K562 (cell line): ENCODE measurements at regions of chr13 and their contacts with region 1.

Region 1: DNA sequence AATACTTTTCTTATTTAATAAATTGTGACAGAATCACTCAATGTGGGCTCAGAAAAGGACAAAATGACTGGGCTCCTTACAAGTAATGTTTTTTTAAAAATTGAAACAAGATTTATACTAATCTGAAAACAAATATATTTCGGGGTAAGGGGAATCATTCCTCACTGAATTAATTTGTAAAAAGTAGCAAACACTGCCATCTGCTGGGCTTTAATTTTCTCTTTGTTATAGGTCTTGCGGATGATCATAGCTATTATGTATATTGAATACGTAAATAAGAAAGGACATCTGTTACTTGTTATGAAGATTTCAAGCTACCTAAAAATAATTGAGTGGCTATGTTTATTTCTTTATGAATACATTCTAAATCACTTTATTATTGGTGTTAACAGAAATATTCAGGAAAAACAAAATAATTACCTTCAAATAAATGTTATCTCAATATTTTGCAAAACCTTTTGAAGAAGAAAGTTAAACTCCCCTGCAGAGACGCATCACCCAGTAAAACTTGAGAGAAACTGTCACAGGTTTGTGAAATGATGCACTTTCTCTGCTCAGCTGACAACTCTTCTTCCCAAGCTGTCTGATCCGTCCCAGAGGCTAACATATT is 17.8 kb upstream of the ENOX1 start:
- DNase-seq: peak in 3 of 4 experiments; percentile 8 to 36 (median 18)
- ATAC-seq: peak; percentile 64; the same call in 1 of the 3 replicates
- H3K4me3 ChIP-seq: no peak overlapping the region
- H3K27ac ChIP-seq: no peak overlapping the region
- H3K4me1 ChIP-seq: no peaks in the 10 kb centered on the region
- H3K27me3 ChIP-seq: no peaks in the 10 kb centered on the region
- CTCF ChIP-seq: peak in 1 of 3 experiments; percentile 50; a peak in 2 of 6 replicates
- EP300 ChIP-seq: no peak
- POLR2A ChIP-seq: no peak
- RAD21 ChIP-seq: peak; percentile 51 to 63

Region 2: GRCh38 chr13:42969558-42970172 is 834.9 kb before region 1 on chr13:
- CTCF ChIA-PET with region 1: no interaction called
- POLR2A ChIA-PET with region 1: no interaction called
- in situ Hi-C with region 1: no loop called
- intact Hi-C with region 1: loop called (anchors 5 kb)
- DNase-seq: peak; percentile 63 to 69 (median 65)
- ATAC-seq: peak; percentile 95
- H3K4me3 ChIP-seq: no peak overlapping the region
- H3K27ac ChIP-seq: no peak overlapping the region
- H3K4me1 ChIP-seq: no peaks in the 10 kb centered on the region
- H3K27me3 ChIP-seq: no peaks in the 10 kb centered on the region
- CTCF ChIP-seq: peak; percentile 64 to 77 (median 70)
- EP300 ChIP-seq: no peak
- POLR2A ChIP-seq: no peak
- RAD21 ChIP-seq: peak; percentile 19 to 51; a peak in 2 of 4 replicates

Region 3: DNA sequence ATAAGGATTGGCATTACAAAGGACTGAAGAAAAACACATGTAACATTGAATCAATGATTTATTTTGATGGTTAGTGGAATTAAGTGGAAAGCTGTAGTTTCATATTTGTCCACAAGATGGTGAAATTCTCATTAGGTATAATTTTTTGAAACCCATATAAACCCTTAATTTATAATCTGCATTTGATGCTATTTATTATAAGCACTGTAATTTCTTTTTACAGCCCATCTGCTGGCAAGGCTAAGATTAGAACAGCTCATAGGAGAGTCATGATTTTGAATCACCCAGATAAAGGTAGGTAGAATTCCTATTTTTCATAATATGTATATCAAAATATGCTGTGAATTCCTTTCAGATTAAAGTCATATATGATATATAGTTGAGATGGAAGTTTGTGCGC is 719.0 kb before region 1 on chr13:
- CTCF ChIA-PET with region 1: no interaction called
- POLR2A ChIA-PET with region 1: no interaction called
- in situ Hi-C with region 1: no loop called
- intact Hi-C with region 1: loop called (anchors 5 kb)
- DNase-seq: peak; percentile 2 to 3 (median 3)
- ATAC-seq: no peak
- H3K4me3 ChIP-seq: no peak overlapping the region
- H3K27ac ChIP-seq: no peak overlapping the region
- H3K4me1 ChIP-seq: no peaks in the 10 kb centered on the region
- H3K27me3 ChIP-seq: no peaks in the 10 kb centered on the region
- CTCF ChIP-seq: peak in 1 of 3 experiments; percentile 41; a peak in 3 of 6 replicates
- EP300 ChIP-seq: no peak
- POLR2A ChIP-seq: no peak
- RAD21 ChIP-seq: peak in 1 of 2 experiments; percentile 28; a peak in 2 of 4 replicates

Region 4: GRCh38 chr13:43648733-43649132 is 155.8 kb before region 1 on chr13:
- CTCF ChIA-PET with region 1: no interaction called
- POLR2A ChIA-PET with region 1: no interaction called
- in situ Hi-C with region 1: no loop called
- intact Hi-C with region 1: no loop called
- DNase-seq: no peak
- ATAC-seq: no peak
- H3K4me3 ChIP-seq: no peak overlapping the region
- H3K27ac ChIP-seq: no peak overlapping the region
- H3K4me1 ChIP-seq: no peaks in the 10 kb centered on the region
- H3K27me3 ChIP-seq: no peaks in the 10 kb centered on the region
- CTCF ChIP-seq: no peak
- EP300 ChIP-seq: no peak
- POLR2A ChIP-seq: no peak
- RAD21 ChIP-seq: no peak